CD4-positive, alpha-beta T cell (primary cell): ENCODE measurements at regions of chr6 and their contacts with region 1.

Region 1: DNA sequence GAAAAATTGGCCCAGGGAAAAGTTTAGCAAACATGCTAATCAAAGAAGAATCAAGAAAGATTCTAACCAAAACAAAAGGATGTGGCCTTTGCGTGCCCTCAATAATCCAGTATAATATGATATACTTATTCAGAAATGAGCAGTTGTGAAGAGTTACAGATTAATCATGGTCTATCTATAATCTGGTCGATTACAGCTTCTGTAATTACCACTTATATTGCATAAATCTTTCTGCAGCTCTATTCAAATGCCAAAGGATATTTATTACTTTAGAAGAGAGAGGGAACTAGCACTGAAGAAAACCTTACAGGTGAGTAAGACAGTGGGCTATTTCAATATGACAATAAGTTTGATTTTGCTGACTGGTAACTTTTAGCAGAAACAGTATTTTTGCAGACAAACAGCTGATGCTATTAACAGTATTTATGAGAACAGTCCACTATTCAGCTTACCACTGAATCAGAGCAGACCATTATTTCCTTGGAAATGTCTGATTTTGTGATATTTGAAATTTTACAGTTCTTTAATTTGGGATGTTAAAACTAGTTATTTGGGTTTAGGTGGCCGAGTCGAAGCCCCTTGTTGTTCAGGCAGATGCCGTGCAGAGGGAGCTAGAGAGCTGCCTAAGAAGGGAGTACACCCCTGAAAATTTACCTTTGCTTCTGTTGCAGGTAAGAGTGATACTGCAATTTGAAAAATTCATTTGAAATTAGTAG is 92.2 kb downstream of the CEP57L1 start:
- DNase-seq: peak; percentile 35 to 79 (median 57)
- ATAC-seq: peak; percentile 93
- H3K4me3 ChIP-seq: no peak overlapping the region
- H3K4me3 Mint-ChIP-seq: no peak overlapping the region
- H3K27ac ChIP-seq: no peak overlapping the region
- H3K27ac Mint-ChIP-seq: no peak overlapping the region
- H3K4me1 ChIP-seq: no peaks in the 10 kb centered on the region
- H3K4me1 Mint-ChIP-seq: no peaks in the 10 kb centered on the region
- H3K27me3 ChIP-seq: peaks cover 0 to 15% of the 10 kb centered on the region in 2 experiments
- H3K27me3 Mint-ChIP-seq: peaks cover 22% of the 10 kb centered on the region
- CTCF ChIP-seq: peak; percentile 95

Region 2: DNA sequence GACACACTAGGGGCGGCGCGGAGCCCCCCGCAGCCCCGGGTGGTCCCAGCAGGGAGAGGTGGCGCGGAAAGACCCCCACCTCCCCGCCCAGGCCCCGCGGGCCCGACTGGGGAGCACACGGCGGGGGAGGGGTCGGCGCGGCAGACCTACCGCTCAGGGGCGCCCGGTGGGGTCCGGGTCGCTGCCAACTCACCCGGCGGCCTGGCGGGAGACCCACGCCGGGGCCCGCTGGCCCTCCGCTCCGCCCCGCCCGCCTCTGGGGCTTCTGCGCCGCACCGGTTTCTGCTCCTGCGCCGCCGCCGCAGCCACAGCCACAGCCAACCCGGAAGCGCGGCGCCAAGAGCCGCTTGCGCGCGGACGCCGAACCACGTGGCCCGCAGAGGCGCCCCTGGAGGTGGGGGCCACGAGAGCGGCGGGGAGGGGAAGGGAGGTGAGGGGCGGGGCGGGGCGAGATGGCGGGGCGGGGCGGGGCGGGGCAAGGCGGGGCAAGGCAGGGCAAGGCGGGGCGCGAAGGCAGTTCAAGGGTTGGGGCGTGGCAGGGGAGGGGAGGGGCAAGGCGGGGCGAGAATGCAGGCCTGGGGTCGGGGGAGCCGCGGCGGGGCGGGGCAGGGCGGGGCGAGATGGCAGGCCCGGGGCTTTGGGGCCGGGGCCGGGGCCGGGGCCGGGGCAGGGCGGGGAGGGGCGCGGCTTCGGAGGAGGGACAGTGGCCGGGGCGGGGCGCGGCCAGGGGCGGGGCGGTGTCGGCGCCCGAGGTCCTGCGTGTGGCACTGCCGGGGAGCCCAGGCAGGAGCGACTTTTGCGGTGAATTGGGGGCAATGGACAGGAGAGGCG is 295.6 kb after region 1 on chr6 and contains the start of gene ZBTB24:
- CTCF ChIA-PET with region 1: no interaction called
- POLR2A ChIA-PET with region 1: no interaction called
- intact Hi-C with region 1: loop called in 1 of 2 experiments (anchors 5 kb)
- DNase-seq: peak; percentile 78 to 97 (median 88)
- ATAC-seq: peak; percentile 87
- H3K4me3 ChIP-seq: peak within 1 kb of the TSS; percentile 85
- H3K4me3 Mint-ChIP-seq: peak within 1 kb of the TSS; percentile 96
- H3K27ac ChIP-seq: peak within 1 kb of the TSS; percentile 68 to 77
- H3K27ac Mint-ChIP-seq: peak within 1 kb of the TSS; percentile 79
- H3K4me1 ChIP-seq: peaks cover 36% of the 10 kb centered on the region
- H3K4me1 Mint-ChIP-seq: peaks cover 55% of the 10 kb centered on the region
- H3K27me3 ChIP-seq: no peaks in the 10 kb centered on the region
- H3K27me3 Mint-ChIP-seq: no peaks in the 10 kb centered on the region
- CTCF ChIP-seq: no peak
- total RNA-seq, gene ZBTB24: 10.4 to 10.5 TPM

Region 3: GRCh38 chr6:109705258-109705657 is 517.7 kb after region 1 on chr6:
- CTCF ChIA-PET with region 1: interaction called, 5 read pairs
- POLR2A ChIA-PET with region 1: no interaction called
- intact Hi-C with region 1: loop called in 1 of 2 experiments (anchors 5 kb)
- DNase-seq: peak; percentile 51 to 88 (median 66)
- ATAC-seq: peak; percentile 97
- H3K4me3 ChIP-seq: no peak overlapping the region
- H3K4me3 Mint-ChIP-seq: no peak overlapping the region
- H3K27ac ChIP-seq: no peak overlapping the region
- H3K27ac Mint-ChIP-seq: no peak overlapping the region
- H3K4me1 ChIP-seq: no peaks in the 10 kb centered on the region
- H3K4me1 Mint-ChIP-seq: peaks cover 40% of the 10 kb centered on the region
- H3K27me3 ChIP-seq: no peaks in the 10 kb centered on the region
- H3K27me3 Mint-ChIP-seq: no peaks in the 10 kb centered on the region
- CTCF ChIP-seq: peak; percentile 91

Region 4: DNA sequence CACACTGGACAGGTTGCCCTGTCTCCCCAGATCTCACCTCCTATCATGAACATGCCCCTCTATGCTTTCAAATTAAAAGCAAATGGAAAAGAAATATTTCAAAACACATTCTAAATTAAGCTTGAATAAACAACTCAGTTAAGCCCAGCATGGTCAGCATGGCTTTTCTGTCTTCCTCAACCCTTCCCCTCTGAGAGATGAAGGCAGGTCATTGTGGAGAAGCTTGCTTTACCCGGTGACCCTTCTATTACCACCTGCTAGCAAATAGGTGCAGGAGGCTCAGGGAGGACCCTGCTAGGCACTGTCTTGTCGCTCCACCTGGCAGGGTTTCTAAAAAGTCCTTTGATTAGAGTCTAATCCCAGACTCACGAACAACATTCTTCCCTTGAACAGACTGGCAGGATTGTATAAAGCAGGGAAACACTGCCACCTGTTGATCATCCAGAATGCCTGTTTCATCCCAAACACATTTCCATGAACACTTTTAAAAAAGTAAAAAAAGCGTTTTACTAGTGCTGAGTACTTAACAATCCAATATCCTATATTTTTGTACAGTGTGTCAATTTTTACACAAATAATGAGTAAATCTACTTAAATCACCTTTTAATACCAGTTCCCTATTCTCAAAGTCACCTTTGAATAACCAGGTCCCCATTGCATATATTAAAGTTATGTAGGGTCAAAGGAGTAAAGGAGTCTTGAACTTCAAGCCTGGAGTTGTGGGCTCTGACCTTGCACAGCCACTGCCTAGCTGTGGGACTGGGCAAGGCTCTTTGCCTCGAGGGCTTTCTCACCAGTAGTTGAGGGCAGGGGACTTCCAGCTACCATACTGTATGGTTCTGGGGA is 866.1 kb after region 1 on chr6:
- CTCF ChIA-PET with region 1: no interaction called
- POLR2A ChIA-PET with region 1: no interaction called
- intact Hi-C with region 1: loop called in 1 of 2 experiments (anchors 5 kb)
- DNase-seq: peak in 4 of 14 experiments; percentile 11 to 54 (median 44)
- ATAC-seq: no peak
- H3K4me3 ChIP-seq: no peak overlapping the region
- H3K4me3 Mint-ChIP-seq: no peak overlapping the region
- H3K27ac ChIP-seq: no peak overlapping the region
- H3K27ac Mint-ChIP-seq: no peak overlapping the region
- H3K4me1 ChIP-seq: no peaks in the 10 kb centered on the region
- H3K4me1 Mint-ChIP-seq: no peaks in the 10 kb centered on the region
- H3K27me3 ChIP-seq: peaks cover 0 to 4% of the 10 kb centered on the region in 2 experiments
- H3K27me3 Mint-ChIP-seq: peaks cover 19% of the 10 kb centered on the region
- CTCF ChIP-seq: peak; percentile 52